Caco-2 (cell line): ENCODE measurements at regions of chr7 and their contacts with region 1.

Region 1: DNA sequence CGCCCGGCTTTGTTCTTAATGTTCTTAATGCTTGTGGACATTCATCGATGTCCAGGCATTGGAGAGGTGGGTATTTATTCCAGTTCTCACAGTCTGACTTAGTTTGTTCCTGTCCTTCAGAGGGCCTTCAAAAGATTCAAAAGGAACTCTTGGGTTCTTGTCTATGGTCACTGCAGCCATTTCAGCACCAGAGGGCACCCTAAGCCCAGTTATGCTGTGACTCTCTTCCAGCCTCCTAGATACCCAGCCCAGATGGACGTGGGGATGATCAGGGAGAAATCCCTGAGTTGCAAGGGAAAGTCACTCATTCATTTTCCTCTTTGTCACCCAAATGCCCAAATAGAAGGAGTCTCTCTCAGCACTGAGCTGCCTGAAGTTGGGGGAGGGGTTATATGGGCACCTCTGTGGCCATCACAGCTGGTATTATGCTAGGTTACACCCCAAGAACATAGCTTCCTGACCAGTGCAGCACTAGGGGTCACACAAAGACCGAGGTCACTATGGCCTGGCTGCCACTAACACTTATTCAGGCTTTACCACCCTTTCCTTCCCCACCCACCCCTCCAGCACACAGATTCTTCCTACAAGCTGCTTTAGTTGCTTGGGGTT is 26.5 kb upstream of the CCDC126 start:
- DNase-seq: peak; percentile 78 to 82
- H3K4me3 ChIP-seq: no peak overlapping the region
- H3K4me3 Mint-ChIP-seq: no peak overlapping the region
- H3K27ac Mint-ChIP-seq: no peak overlapping the region
- H3K4me1 ChIP-seq: no peaks in the 10 kb centered on the region
- H3K4me1 Mint-ChIP-seq: no peaks in the 10 kb centered on the region
- H3K27me3 ChIP-seq: no peaks in the 10 kb centered on the region
- H3K27me3 Mint-ChIP-seq: peaks cover 3% of the 10 kb centered on the region
- CTCF ChIP-seq: peak; percentile 86 to 94

Region 2: GRCh38 chr7:23546897-23547572 is 23.7 kb before region 1 on chr7:
- CTCF ChIA-PET with region 1: interaction called, 6 read pairs
- POLR2A ChIA-PET with region 1: no interaction called
- intact Hi-C with region 1: loop called (anchors 1 kb)
- DNase-seq: peak; percentile 86 to 87
- H3K4me3 ChIP-seq: no peak overlapping the region
- H3K4me3 Mint-ChIP-seq: no peak overlapping the region
- H3K27ac Mint-ChIP-seq: no peak overlapping the region
- H3K4me1 ChIP-seq: no peaks in the 10 kb centered on the region
- H3K4me1 Mint-ChIP-seq: peaks cover 12% of the 10 kb centered on the region
- H3K27me3 ChIP-seq: no peaks in the 10 kb centered on the region
- H3K27me3 Mint-ChIP-seq: peaks cover 2% of the 10 kb centered on the region
- CTCF ChIP-seq: peak; percentile 93 to 96

Region 3: DNA sequence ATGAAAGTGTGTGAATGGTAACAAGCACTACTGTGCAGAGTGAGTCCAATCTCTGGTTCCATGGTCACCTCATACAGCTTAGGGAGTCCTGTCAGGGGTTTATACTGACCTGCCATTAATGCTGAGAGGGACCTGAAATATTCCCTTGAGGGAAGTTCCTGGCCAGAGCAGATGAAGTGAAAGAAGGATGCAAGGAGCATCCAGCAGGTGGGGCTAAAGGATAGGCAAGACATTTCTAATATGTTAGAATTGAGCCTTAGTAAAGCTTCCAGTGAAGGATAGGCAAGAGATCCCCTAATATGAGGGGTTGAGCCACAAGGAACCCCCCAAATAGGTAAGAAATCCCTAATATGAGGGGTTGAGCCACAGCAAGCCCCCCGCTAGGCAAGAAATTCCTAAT is 83.8 kb after region 1 on chr7:
- CTCF ChIA-PET with region 1: no interaction called
- POLR2A ChIA-PET with region 1: no interaction called
- intact Hi-C with region 1: loop called (anchors 1 kb)
- DNase-seq: peak in 1 of 2 experiments; percentile 30
- H3K4me3 ChIP-seq: no peak overlapping the region
- H3K4me3 Mint-ChIP-seq: no peak overlapping the region
- H3K27ac Mint-ChIP-seq: no peak overlapping the region
- H3K4me1 ChIP-seq: no peaks in the 10 kb centered on the region; the same call in 1 of the 2 replicates
- H3K4me1 Mint-ChIP-seq: peaks cover 7% of the 10 kb centered on the region
- H3K27me3 ChIP-seq: no peaks in the 10 kb centered on the region
- H3K27me3 Mint-ChIP-seq: no peaks in the 10 kb centered on the region
- CTCF ChIP-seq: peak in 1 of 2 experiments; percentile 12

Region 4: GRCh38 chr7:23696916-23697441 is 126.3 kb after region 1 on chr7:
- CTCF ChIA-PET with region 1: interaction called, 13 read pairs
- POLR2A ChIA-PET with region 1: no interaction called
- intact Hi-C with region 1: loop called (anchors 1 kb)
- DNase-seq: peak; percentile 81 to 82
- H3K4me3 ChIP-seq: no peak overlapping the region
- H3K4me3 Mint-ChIP-seq: no peak overlapping the region
- H3K27ac Mint-ChIP-seq: peak overlapping the region; percentile 26
- H3K4me1 ChIP-seq: peaks cover 4% of the 10 kb centered on the region; the same call in 1 of the 2 replicates
- H3K4me1 Mint-ChIP-seq: peaks cover 8% of the 10 kb centered on the region
- H3K27me3 ChIP-seq: no peaks in the 10 kb centered on the region
- H3K27me3 Mint-ChIP-seq: no peaks in the 10 kb centered on the region
- CTCF ChIP-seq: peak; percentile 76 to 82

Region 5: GRCh38 chr7:23863209-23863798 is 292.6 kb after region 1 on chr7:
- CTCF ChIA-PET with region 1: no interaction called
- POLR2A ChIA-PET with region 1: no interaction called
- intact Hi-C with region 1: loop called (anchors 1 kb)
- DNase-seq: peak in 1 of 2 experiments; percentile 44
- H3K4me3 ChIP-seq: no peak overlapping the region
- H3K4me3 Mint-ChIP-seq: no peak overlapping the region
- H3K27ac Mint-ChIP-seq: no peak overlapping the region
- H3K4me1 ChIP-seq: no peaks in the 10 kb centered on the region
- H3K4me1 Mint-ChIP-seq: no peaks in the 10 kb centered on the region
- H3K27me3 ChIP-seq: no peaks in the 10 kb centered on the region
- H3K27me3 Mint-ChIP-seq: peaks cover 7% of the 10 kb centered on the region
- CTCF ChIP-seq: peak; percentile 62 to 83